Endothelial cell of umbilical vein (primary cell): ENCODE measurements at regions of chr10 and their contacts with region 1.

Region 1: DNA sequence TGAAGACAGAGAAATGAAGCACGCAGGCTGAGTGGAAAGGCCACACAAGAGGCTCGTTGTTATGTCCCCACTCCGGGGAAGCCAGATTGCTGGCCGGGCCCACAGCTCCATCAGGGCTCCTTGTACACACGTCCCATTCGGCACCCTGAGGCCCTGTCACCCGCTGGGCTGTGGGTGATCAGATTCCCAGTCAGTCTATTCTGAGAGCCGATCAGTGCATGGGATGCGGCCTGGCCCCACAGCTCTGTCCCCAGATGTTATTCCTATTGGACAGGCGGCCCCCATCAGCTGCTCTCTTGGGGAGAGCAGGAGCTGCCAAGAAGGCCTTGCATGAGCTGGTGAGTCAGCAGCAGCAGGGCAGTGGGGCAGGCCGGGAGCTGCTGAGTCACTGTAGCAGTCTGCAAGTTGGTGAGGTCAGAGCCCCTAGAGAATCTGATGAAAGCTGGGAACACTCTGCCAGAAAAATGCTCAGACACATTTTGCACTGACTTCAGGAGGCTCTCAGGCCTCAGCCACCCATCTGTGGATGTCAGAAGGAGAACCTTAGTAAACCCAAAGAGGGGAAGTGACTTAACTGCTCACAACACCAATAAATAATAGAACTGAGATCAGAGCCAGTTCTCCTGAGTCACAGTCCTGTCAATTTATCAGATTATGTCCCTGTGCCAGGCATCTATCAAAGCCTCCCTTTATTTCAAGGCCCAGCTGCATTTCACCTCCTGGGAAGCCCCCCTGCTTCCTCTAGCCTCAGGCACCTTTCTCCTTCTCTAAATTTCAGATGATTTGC is 9.4 kb upstream of the PSAP start:
- DNase-seq: peak; percentile 98
- H3K4me3 ChIP-seq: no peak overlapping the region
- H3K27ac ChIP-seq: peak overlapping the region; percentile 93
- H3K4me1 ChIP-seq: peaks cover 19% of the 10 kb centered on the region
- H3K27me3 ChIP-seq: no peaks in the 10 kb centered on the region
- CTCF ChIP-seq: no peak
- POLR2A ChIP-seq: peak; percentile 52

Region 2: GRCh38 chr10:71882813-71883659 is 22.6 kb after region 1 on chr10:
- CTCF ChIA-PET with region 1: interaction called, 11 read pairs
- POLR2A ChIA-PET with region 1: no interaction called
- dilution Hi-C with region 1: no loop called
- intact Hi-C with region 1: loop called (anchors 1 kb)
- DNase-seq: peak; percentile 82
- H3K4me3 ChIP-seq: no peak overlapping the region
- H3K27ac ChIP-seq: no peak overlapping the region
- H3K4me1 ChIP-seq: peaks cover 11% of the 10 kb centered on the region
- H3K27me3 ChIP-seq: no peaks in the 10 kb centered on the region
- CTCF ChIP-seq: no peak
- POLR2A ChIP-seq: no peak

Region 3: DNA sequence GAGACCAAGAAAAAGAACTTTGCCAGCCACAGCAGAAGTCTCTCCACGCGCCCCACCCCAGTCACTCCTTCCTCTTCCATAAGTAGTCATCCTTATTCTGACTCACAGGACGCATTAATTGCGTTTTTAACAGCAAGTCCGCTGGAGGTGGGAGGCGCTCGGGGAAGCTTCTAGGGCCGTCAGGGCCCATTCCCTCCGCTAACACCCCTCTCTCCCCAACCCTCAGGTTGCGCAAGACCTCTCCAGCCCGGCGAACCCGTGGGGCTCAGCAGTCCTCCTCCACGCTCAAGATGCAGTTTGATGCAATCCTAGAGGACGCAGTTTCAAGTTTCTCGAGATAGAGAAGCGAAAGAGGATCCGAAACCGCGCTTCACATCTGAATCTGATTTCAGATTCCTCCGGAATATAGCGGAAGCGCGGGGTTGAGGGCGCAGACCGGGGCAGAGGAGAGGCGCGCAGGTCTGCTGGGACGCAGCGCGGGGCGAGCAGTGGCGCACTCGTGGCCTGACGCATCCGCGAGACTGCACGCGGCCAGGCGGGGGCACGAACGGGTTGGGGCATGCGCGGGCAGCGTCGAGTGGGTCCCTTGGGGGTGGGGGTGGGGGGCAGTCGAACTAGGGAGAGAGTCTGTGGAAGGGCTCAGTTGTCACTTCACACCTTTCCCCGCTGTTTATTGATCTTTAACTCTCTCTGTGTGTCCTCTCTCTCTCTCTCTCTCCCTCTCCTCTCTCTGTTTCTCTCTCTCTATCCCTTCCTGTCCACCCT is 28.4 kb after region 1 on chr10:
- CTCF ChIA-PET with region 1: interaction called, 11 read pairs
- POLR2A ChIA-PET with region 1: no interaction called
- dilution Hi-C with region 1: no loop called
- intact Hi-C with region 1: loop called (anchors 1 kb)
- DNase-seq: peak; percentile 74
- H3K4me3 ChIP-seq: peak overlapping the region; percentile 36 to 73 (median 66)
- H3K27ac ChIP-seq: peak overlapping the region; percentile 83
- H3K4me1 ChIP-seq: peaks cover 8% of the 10 kb centered on the region
- H3K27me3 ChIP-seq: no peaks in the 10 kb centered on the region
- CTCF ChIP-seq: peak in 1 of 2 donors; percentile 22
- POLR2A ChIP-seq: no peak